CD8-positive, alpha-beta T cell (primary cell): ENCODE measurements at regions of chr1 and their contacts with region 1.

Region 1: GRCh38 chr1:8409106-8409505 is 91.2 kb downstream of the SLC45A1 start:
- DNase-seq: peak in 2 of 9 experiments; percentile 49 to 51
- ATAC-seq: peak; percentile 63
- H3K4me3 ChIP-seq: no peak overlapping the region
- H3K4me3 Mint-ChIP-seq: no peak overlapping the region
- H3K27ac ChIP-seq: no peak overlapping the region
- H3K27ac Mint-ChIP-seq: peak overlapping the region; percentile 20
- H3K4me1 ChIP-seq: peaks cover 34% of the 10 kb centered on the region
- H3K4me1 Mint-ChIP-seq: peaks cover 70% of the 10 kb centered on the region
- H3K27me3 ChIP-seq: no peaks in the 10 kb centered on the region
- H3K27me3 Mint-ChIP-seq: no peaks in the 10 kb centered on the region
- CTCF ChIP-seq: peak; percentile 15

Region 2: DNA sequence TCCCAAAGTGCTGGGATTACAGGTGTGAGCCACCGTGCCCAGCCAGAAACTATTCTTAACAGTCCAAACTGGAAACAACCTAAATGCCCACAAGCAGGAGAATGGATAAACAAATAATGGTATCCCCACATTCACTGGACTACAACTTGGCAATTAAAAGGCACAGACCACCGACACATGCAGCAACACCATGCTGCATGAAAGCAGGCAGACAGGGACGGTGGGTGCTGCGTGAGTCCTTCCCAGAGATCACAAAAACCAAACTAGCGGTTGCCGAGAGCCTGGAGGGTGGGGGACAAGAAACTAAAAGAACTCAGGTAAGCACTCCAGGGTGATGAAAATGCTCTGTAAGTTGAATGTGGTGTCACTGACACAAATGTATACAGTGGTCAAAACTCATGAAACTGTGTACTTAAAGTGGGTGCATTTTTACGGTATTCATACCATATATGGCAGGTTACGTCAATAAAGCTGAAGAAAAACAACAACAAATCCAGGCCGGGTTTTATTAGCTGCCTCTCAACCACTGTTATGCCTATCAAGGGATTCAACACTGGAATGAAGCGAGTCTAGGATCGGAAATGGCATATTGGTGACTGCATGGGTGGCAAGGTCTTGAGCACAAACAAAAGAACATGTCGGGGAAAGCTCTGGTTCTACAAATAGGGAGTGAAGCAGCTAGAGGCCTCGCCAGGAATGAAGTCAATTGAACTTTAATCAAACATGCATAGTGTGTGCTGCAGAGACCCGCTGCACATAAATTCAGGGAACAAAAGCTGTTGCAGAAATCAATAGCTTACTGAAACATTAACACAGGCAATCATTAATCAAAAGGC is 38.8 kb before region 1 on chr1:
- CTCF ChIA-PET with region 1: no interaction called
- POLR2A ChIA-PET with region 1: no interaction called
- intact Hi-C with region 1: no loop called
- DNase-seq: no peak
- ATAC-seq: no peak
- H3K4me3 ChIP-seq: no peak overlapping the region
- H3K4me3 Mint-ChIP-seq: no peak overlapping the region
- H3K27ac ChIP-seq: no peak overlapping the region
- H3K27ac Mint-ChIP-seq: peak overlapping the region; percentile 18
- H3K4me1 ChIP-seq: peaks cover 7% of the 10 kb centered on the region
- H3K4me1 Mint-ChIP-seq: peaks cover 45% of the 10 kb centered on the region
- H3K27me3 ChIP-seq: no peaks in the 10 kb centered on the region
- H3K27me3 Mint-ChIP-seq: no peaks in the 10 kb centered on the region
- CTCF ChIP-seq: no peak

Region 3: GRCh38 chr1:8431019-8431418 is 21.9 kb after region 1 on chr1:
- CTCF ChIA-PET with region 1: interaction called, 10 read pairs
- POLR2A ChIA-PET with region 1: interaction called, 3 read pairs
- intact Hi-C with region 1: no loop called
- DNase-seq: peak in 6 of 9 experiments; percentile 38 to 66 (median 59)
- ATAC-seq: peak; percentile 76
- H3K4me3 ChIP-seq: no peak overlapping the region
- H3K4me3 Mint-ChIP-seq: peak overlapping the region; percentile 33
- H3K27ac ChIP-seq: peak overlapping the region in 1 of 2 experiments; percentile 37
- H3K27ac Mint-ChIP-seq: peak overlapping the region; percentile 90
- H3K4me1 ChIP-seq: peaks cover 50% of the 10 kb centered on the region
- H3K4me1 Mint-ChIP-seq: peaks cover 72% of the 10 kb centered on the region
- H3K27me3 ChIP-seq: no peaks in the 10 kb centered on the region
- H3K27me3 Mint-ChIP-seq: no peaks in the 10 kb centered on the region
- CTCF ChIP-seq: peak; percentile 45

Region 4: GRCh38 chr1:8477166-8477982 is 68.3 kb after region 1 on chr1:
- CTCF ChIA-PET with region 1: interaction called, 4 read pairs
- POLR2A ChIA-PET with region 1: no interaction called
- intact Hi-C with region 1: loop called in 1 of 2 experiments (anchors 5 kb)
- DNase-seq: no peak
- ATAC-seq: no peak
- H3K4me3 ChIP-seq: no peak overlapping the region
- H3K4me3 Mint-ChIP-seq: no peak overlapping the region
- H3K27ac ChIP-seq: no peak overlapping the region
- H3K27ac Mint-ChIP-seq: no peak overlapping the region
- H3K4me1 ChIP-seq: peaks cover 11% of the 10 kb centered on the region
- H3K4me1 Mint-ChIP-seq: peaks cover 27% of the 10 kb centered on the region
- H3K27me3 ChIP-seq: no peaks in the 10 kb centered on the region
- H3K27me3 Mint-ChIP-seq: no peaks in the 10 kb centered on the region
- CTCF ChIP-seq: no peak

Region 5: DNA sequence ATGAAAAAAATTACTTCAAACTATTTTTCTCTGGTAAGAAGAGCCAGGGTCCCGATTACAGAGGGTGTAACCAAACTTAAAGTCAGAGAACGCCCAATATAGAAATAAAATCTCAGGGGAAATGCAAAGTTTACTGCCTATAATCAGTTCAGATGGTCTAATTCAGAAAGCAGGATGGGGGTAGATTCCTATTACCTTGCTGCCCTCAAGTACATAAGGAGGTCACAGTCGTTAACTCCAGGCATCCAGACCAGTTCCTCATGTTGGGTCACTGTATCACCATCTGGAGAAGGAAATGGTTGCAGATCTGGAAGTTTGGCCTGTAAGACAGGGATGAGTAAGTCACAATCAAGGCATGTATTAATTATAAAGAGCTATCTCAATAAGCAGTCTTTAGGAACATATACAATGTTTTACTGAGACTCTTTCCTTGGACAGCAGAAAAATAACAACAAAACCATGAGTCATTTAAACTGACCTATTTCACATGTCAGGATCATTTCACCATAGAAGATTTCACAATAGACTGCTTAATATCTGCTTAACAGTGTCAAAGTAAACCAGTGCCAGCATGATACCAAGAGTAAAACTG is 88.2 kb after region 1 on chr1:
- CTCF ChIA-PET with region 1: no interaction called
- POLR2A ChIA-PET with region 1: no interaction called
- intact Hi-C with region 1: no loop called
- DNase-seq: no peak
- ATAC-seq: no peak
- H3K4me3 ChIP-seq: no peak overlapping the region
- H3K4me3 Mint-ChIP-seq: no peak overlapping the region
- H3K27ac ChIP-seq: no peak overlapping the region
- H3K27ac Mint-ChIP-seq: no peak overlapping the region
- H3K4me1 ChIP-seq: no peaks in the 10 kb centered on the region
- H3K4me1 Mint-ChIP-seq: peaks cover 14% of the 10 kb centered on the region
- H3K27me3 ChIP-seq: no peaks in the 10 kb centered on the region
- H3K27me3 Mint-ChIP-seq: no peaks in the 10 kb centered on the region
- CTCF ChIP-seq: no peak